Endothelial cell of umbilical vein (primary cell): ENCODE measurements at regions of chr6 and their contacts with region 1.

Region 1: GRCh38 chr6:26156076-26156849 is 69.0 kb downstream of the HFE start:
- DNase-seq: peak; percentile 94
- H3K4me3 ChIP-seq: peak overlapping the region; percentile 45 to 81 (median 68)
- H3K27ac ChIP-seq: peak overlapping the region; percentile 78
- H3K4me1 ChIP-seq: peaks cover 8% of the 10 kb centered on the region
- H3K27me3 ChIP-seq: peaks cover 0 to 3% of the 10 kb centered on the region in 2 experiments
- CTCF ChIP-seq: no peak
- POLR2A ChIP-seq: peak; percentile 97

Region 2: DNA sequence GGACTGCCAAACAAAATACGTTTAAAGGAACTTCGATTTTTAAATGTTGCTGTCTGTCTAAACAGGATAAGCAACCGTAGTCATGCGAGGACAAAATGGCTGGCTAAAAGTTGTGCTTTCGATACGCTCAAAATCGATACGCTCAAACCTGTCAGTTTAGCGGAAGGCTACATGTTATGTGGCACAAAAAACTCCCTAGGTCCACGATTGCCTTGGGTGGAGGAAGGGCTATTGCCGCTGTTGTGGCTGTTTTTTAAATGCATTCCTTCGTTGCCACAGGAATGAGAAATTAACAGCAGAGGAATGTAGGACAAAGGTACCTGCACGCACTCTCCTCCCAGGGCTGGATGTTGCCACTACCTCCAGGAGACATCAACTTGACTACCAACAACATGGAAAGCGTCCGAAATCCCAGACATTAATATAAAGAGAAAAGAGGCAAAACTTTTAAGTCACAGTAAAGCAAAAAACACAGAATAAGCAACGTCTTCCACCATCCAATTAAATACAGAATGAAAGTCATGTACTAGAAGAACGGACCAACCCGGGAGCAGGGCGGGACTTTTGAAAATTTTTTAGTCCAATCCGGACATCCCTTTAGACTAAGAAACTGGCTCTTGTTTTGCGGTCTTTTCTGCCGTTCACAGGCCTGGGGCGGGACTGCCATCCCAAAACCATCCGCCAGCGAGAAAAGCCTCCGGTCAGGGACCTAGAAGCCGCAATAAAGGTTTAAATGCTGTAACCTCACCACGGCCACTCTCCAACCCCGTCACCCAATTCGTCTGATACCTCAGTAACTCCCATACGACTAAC is 101.2 kb before region 1 on chr6:
- CTCF ChIA-PET with region 1: no interaction called
- POLR2A ChIA-PET with region 1: no interaction called
- dilution Hi-C with region 1: no loop called
- intact Hi-C with region 1: loop called (anchors 1 kb)
- DNase-seq: peak; percentile 94
- H3K4me3 ChIP-seq: peak overlapping the region; percentile 62 to 74 (median 65)
- H3K27ac ChIP-seq: peak overlapping the region; percentile 98
- H3K4me1 ChIP-seq: peaks cover 13% of the 10 kb centered on the region
- H3K27me3 ChIP-seq: no peaks in the 10 kb centered on the region
- CTCF ChIP-seq: no peak
- POLR2A ChIP-seq: peak; percentile 98

Region 3: GRCh38 chr6:26075063-26075717 is 81.1 kb before region 1 on chr6:
- CTCF ChIA-PET with region 1: no interaction called
- POLR2A ChIA-PET with region 1: interaction called, 10 read pairs
- dilution Hi-C with region 1: no loop called
- intact Hi-C with region 1: no loop called
- DNase-seq: no peak
- H3K4me3 ChIP-seq: no peak overlapping the region
- H3K27ac ChIP-seq: no peak overlapping the region
- H3K4me1 ChIP-seq: no peaks in the 10 kb centered on the region
- H3K27me3 ChIP-seq: peaks cover 0 to 1% of the 10 kb centered on the region in 2 experiments
- CTCF ChIP-seq: no peak
- POLR2A ChIP-seq: no peak

Region 4: DNA sequence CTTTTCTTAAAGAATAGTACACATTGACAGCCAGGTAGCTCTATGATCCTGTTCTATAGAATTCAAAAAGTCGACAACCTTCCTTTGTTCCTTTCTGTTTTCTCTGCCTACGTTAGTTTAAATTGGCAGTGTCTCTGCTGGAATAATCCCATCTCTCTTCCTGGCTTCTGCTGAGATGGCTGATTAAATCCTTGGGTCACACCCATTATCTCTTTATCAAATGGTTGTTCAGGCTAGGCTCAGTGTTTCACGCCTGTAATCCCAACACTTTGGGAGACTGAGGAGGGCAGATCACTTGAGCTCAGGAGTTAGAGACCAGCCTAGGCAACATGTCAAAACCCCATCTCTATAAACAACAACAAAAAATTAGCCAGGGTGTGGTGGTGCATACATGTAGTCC is 24.6 kb before region 1 on chr6:
- CTCF ChIA-PET with region 1: interaction called, 7 read pairs
- POLR2A ChIA-PET with region 1: interaction called, 265 read pairs
- dilution Hi-C with region 1: no loop called
- intact Hi-C with region 1: loop called (anchors 2 kb)
- DNase-seq: no peak
- H3K4me3 ChIP-seq: no peak overlapping the region
- H3K27ac ChIP-seq: no peak overlapping the region
- H3K4me1 ChIP-seq: peaks cover 1% of the 10 kb centered on the region
- H3K27me3 ChIP-seq: no peaks in the 10 kb centered on the region
- CTCF ChIP-seq: no peak
- POLR2A ChIP-seq: no peak

Region 5: DNA sequence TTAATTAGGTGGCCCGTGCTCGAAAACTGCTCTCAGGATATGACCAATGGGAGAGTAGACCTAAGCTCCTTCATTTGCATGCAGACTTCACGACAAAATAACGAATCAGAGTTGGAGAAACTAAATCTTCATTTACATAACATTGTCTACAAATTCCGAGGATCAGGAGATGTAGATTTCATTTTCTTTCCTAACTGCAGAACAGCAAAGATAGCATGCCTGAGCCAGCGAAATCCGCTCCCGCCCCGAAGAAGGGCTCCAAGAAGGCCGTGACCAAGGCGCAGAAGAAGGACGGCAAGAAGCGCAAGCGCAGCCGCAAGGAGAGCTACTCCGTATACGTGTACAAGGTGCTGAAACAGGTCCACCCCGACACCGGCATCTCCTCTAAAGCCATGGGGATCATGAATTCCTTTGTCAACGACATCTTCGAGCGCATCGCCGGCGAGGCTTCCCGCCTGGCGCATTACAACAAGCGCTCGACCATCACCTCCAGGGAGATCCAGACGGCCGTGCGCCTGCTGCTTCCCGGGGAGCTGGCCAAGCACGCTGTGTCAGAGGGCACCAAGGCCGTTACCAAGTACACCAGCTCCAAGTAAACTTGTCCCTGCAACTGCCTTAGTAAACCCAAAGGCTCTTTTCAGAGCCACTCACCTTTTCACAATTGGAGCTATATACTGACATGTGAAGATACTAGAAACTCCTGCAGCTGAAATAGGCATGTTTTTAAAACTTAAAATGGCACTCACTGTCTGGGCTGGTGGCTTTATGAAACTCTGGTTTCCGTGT is 27.5 kb after region 1 on chr6:
- CTCF ChIA-PET with region 1: interaction called, 12 read pairs
- POLR2A ChIA-PET with region 1: interaction called, 27 read pairs
- dilution Hi-C with region 1: no loop called
- intact Hi-C with region 1: loop called (anchors 1 kb)
- DNase-seq: peak; percentile 93
- H3K4me3 ChIP-seq: peak overlapping the region; percentile 13 to 66 (median 34)
- H3K27ac ChIP-seq: peak overlapping the region; percentile 58
- H3K4me1 ChIP-seq: peaks cover 20% of the 10 kb centered on the region
- H3K27me3 ChIP-seq: no peaks in the 10 kb centered on the region
- CTCF ChIP-seq: no peak
- POLR2A ChIP-seq: peak; percentile 59